ENCODE measurements at regions of chr7 and their contacts with region 1.

Region 1: GRCh38 chr7:141975806-141976523 is 2.4 kb upstream of the TAS2R38 start:
- DNase-seq: peak; percentile 49
- ATAC-seq: peak; percentile 81
- H3K4me3 Mint-ChIP-seq: peak overlapping the region; percentile 82
- H3K27ac Mint-ChIP-seq: peak overlapping the region; percentile 68
- H3K4me1 Mint-ChIP-seq: peaks cover 28% of the 10 kb centered on the region
- H3K27me3 Mint-ChIP-seq: no peaks in the 10 kb centered on the region
- CTCF ChIP-seq: peak; percentile 19

Region 2: GRCh38 chr7:141960687-141961422 is 15.1 kb before region 1 on chr7:
- CTCF ChIA-PET with region 1: interaction called, 3 read pairs
- POLR2A ChIA-PET with region 1: no interaction called
- intact Hi-C with region 1: loop called (anchors 1 kb)
- DNase-seq: no peak
- ATAC-seq: peak; percentile 75
- H3K4me3 Mint-ChIP-seq: peak overlapping the region; percentile 13
- H3K27ac Mint-ChIP-seq: peak overlapping the region; percentile 85
- H3K4me1 Mint-ChIP-seq: peaks cover 20% of the 10 kb centered on the region
- H3K27me3 Mint-ChIP-seq: no peaks in the 10 kb centered on the region
- CTCF ChIP-seq: no peak

Region 3: DNA sequence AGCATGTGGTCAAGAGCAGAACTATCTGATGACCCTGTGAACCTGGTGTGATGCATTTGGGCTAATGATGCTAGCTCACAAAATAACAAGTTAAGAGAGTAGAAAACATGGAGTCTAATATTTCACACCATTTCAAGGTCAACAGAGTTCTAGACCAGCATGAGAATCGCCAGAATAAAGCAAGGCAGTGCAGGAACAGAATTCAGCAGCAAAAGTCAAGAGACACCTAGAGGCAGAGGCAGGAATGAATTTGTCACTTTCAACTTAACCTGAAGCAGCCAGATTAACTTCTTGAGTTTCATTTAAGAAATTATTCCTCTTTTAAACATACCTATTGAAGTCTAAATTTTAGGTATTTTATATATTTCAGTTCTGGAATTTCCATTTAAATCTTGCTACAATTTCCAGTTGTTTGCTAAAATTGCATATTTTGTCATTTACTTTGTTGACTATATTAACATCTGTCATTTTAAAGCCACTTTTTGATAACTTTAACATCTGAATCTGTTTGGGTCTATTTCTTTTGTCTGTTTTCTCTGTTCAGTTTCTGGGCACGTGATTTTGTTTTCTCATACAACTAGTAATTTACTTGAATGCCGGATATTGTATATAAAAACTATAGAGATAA is 326.1 kb after region 1 on chr7:
- CTCF ChIA-PET with region 1: no interaction called
- POLR2A ChIA-PET with region 1: no interaction called
- intact Hi-C with region 1: loop called (anchors 5 kb)
- DNase-seq: no peak
- ATAC-seq: no peak
- H3K4me3 Mint-ChIP-seq: no peak overlapping the region
- H3K27ac Mint-ChIP-seq: no peak overlapping the region
- H3K4me1 Mint-ChIP-seq: no peaks in the 10 kb centered on the region
- H3K27me3 Mint-ChIP-seq: peaks cover 5% of the 10 kb centered on the region
- CTCF ChIP-seq: no peak

Region 4: DNA sequence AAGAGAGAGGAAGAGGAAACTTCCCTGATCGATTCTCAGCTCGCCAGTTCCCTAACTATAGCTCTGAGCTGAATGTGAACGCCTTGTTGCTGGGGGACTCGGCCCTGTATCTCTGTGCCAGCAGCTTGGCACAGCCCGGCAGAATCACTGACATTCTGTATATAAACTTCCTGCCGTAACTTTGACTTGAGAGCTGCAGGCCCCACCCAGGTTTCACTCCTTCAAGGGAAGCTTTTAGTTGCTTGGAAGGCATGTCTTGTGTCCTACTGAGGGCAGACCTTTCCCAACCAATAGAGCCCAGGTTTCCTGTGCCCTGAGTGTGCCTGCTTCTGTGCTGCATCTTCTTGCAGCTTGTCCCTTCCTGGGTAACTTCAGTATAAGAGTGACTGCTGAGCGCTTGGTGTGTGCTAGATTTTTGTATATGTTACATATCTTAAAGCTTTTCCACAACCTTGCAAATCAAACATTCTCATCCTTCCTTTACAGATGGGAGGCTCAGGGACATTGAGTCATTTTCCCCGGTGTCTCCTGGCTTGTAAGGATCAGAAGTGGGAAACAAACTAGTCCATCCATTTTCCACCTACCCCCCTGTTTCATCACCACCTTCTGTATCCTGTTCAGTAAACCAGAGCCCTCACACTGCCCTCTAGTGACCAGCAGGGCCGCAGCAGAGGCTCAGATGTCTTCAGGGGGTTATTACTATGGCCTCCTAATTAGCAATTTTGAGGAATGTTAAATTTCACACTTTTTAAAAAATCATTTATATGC is 507.1 kb after region 1 on chr7:
- CTCF ChIA-PET with region 1: interaction called, 4 read pairs
- POLR2A ChIA-PET with region 1: no interaction called
- intact Hi-C with region 1: loop called (anchors 2 kb)
- DNase-seq: no peak
- ATAC-seq: peak; percentile 72
- H3K4me3 Mint-ChIP-seq: no peak overlapping the region
- H3K27ac Mint-ChIP-seq: no peak overlapping the region
- H3K4me1 Mint-ChIP-seq: peaks cover 25% of the 10 kb centered on the region
- H3K27me3 Mint-ChIP-seq: peaks cover 11% of the 10 kb centered on the region
- CTCF ChIP-seq: no peak